A673 (cell line): ENCODE measurements at regions of chrX and their contacts with region 1.

Region 1: DNA sequence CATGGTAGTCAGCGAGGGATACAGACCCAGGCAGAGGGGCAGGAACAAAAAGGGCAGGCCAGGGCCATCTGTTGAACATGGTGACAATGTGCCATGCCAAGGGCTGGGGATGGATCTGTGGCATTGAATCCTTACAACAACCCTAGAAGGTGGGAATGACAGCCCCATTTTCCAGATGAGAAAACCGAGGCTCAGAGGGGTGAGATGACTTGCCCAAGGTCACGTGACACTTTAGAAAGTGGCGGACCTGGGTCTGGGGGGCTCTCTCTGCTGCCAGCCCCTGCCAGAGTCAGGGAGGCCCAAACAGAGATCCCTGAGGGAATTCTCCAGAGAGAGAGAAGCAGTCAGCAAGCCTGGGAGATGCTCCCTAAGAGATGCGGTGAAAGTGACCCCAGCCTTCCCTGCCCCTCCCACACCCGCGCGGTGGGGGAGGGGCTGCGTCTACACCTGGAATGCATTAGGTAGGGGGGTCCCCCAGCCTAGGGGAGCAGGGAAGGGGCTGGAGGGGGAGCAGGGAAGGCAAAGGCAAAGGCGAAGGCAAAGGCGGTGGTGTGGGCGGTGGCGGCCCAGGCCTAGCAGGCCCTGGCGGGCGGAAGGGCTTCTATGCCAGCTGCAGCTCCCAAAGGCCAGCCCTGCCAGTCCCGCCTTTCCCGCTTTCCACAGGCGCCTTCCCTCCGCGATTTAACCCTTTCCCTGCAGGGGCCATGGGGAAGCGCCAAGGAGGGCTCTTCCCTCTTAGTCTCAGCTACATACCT is 13.0 kb downstream of the FGD1 start:
- DNase-seq: no peak
- H3K4me3 ChIP-seq: no peak overlapping the region
- H3K27ac ChIP-seq: no peak overlapping the region
- H3K4me1 ChIP-seq: peaks cover 16% of the 10 kb centered on the region
- H3K27me3 ChIP-seq: no peaks in the 10 kb centered on the region
- CTCF ChIP-seq: no peak

Region 2: DNA sequence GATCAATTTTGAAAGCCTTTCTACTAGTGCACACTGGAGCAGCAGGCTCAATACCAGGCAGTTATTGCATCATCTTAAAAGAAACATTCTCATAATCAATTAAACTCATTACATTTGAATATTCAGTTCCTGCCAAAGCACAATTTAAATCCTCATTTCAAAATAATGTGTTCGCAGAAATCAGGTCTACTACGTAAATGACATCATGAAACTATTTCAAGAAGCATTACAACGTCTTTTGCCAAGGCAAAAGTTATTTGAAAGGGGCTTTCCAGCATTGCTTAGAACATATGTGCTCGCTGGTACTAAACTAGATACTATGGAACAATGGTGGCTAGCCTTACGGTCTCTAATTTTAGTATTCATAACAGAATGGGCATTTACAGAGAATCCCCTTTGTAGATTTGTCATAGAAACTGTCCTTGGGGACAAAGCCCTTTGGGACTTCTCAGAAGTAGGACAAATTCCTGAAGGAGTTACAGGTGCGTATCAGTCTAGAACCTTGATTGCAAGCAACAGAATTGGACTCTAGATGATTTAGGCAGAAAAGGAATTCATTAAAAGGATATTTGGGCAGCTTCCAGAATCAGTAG is 768.9 kb before region 1 on chrX:
- CTCF ChIA-PET with region 1: no interaction called
- POLR2A ChIA-PET with region 1: interaction called, 10 read pairs
- intact Hi-C with region 1: no loop called
- DNase-seq: no peak
- H3K4me3 ChIP-seq: no peak overlapping the region
- H3K27ac ChIP-seq: no peak overlapping the region
- H3K4me1 ChIP-seq: peaks cover 6% of the 10 kb centered on the region
- H3K27me3 ChIP-seq: no peaks in the 10 kb centered on the region
- CTCF ChIP-seq: no peak

Region 3: GRCh38 chrX:54758114-54759055 is 275.4 kb after region 1 on chrX:
- CTCF ChIA-PET with region 1: no interaction called
- POLR2A ChIA-PET with region 1: no interaction called
- intact Hi-C with region 1: no loop called
- DNase-seq: no peak
- H3K4me3 ChIP-seq: no peak overlapping the region
- H3K27ac ChIP-seq: no peak overlapping the region
- H3K4me1 ChIP-seq: no peaks in the 10 kb centered on the region
- H3K27me3 ChIP-seq: no peaks in the 10 kb centered on the region
- CTCF ChIP-seq: no peak